ENCODE measurements at regions of chr17 and their contacts with region 1.

Region 1: DNA sequence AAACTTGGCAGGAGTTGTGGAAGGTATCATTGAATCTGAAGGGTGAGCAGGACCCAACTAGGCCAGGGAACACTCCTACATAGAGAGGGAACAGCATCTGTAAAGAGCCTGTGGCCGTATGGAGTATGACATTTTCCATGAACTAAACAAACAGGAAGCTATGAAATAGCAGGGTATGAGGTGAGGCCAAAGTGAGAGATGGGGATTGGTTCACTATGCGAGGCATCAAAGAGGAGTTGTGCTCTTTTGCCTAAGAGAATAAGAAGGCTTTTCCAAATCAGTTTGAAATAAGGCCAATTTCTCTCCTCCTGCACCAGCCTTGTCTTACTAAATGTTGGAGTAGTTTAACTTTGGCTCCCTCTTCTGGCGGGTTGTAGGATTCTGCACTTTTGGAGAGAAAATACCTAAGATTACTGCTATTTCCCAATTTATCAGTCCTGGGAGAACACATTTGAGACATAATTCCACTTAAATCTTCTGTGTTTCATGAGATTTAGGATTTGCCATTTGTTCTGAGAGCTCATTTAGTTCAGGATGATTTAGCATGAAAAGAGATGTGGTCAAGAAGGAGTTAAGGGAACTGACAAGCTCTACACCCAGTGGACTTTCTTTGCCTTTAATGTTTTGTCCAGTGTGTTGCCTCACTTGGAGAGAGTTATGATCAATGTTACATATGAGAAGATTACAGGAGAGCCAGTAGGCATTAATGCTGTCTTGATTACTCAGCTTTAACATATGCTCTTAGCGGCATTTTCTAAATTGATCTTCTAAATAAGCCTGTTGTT is 55.4 kb downstream of the TNRC6C start:
- DNase-seq: peak; percentile 69
- ATAC-seq: peak; percentile 65
- H3K4me3 Mint-ChIP-seq: no peak overlapping the region
- H3K27ac Mint-ChIP-seq: no peak overlapping the region
- H3K4me1 Mint-ChIP-seq: peaks cover 25% of the 10 kb centered on the region
- H3K27me3 Mint-ChIP-seq: no peaks in the 10 kb centered on the region
- CTCF ChIP-seq: peak; percentile 92

Region 2: GRCh38 chr17:77645072-77646045 is 368.5 kb before region 1 on chr17:
- CTCF ChIA-PET with region 1: interaction called, 13 read pairs
- POLR2A ChIA-PET with region 1: interaction called, 3 read pairs
- intact Hi-C with region 1: no loop called
- DNase-seq: peak; percentile 86
- ATAC-seq: peak; percentile 78
- H3K4me3 Mint-ChIP-seq: peak overlapping the region; percentile 56
- H3K27ac Mint-ChIP-seq: peak overlapping the region; percentile 94
- H3K4me1 Mint-ChIP-seq: peaks cover 32% of the 10 kb centered on the region
- H3K27me3 Mint-ChIP-seq: no peaks in the 10 kb centered on the region
- CTCF ChIP-seq: peak; percentile 56

Region 3: GRCh38 chr17:77881545-77881944 is 132.3 kb before region 1 on chr17:
- CTCF ChIA-PET with region 1: interaction called, 10 read pairs
- POLR2A ChIA-PET with region 1: no interaction called
- intact Hi-C with region 1: loop called (anchors 10 kb)
- DNase-seq: peak; percentile 88
- ATAC-seq: peak; percentile 60
- H3K4me3 Mint-ChIP-seq: peak overlapping the region; percentile 45
- H3K27ac Mint-ChIP-seq: peak overlapping the region; percentile 86
- H3K4me1 Mint-ChIP-seq: peaks cover 76% of the 10 kb centered on the region
- H3K27me3 Mint-ChIP-seq: no peaks in the 10 kb centered on the region
- CTCF ChIP-seq: no peak

Region 4: GRCh38 chr17:77963441-77963840 is 50.4 kb before region 1 on chr17:
- CTCF ChIA-PET with region 1: interaction called, 17 read pairs
- POLR2A ChIA-PET with region 1: interaction called, 5 read pairs
- intact Hi-C with region 1: loop called (anchors 5 kb)
- DNase-seq: peak; percentile 68
- ATAC-seq: peak; percentile 24
- H3K4me3 Mint-ChIP-seq: peak overlapping the region; percentile 56
- H3K27ac Mint-ChIP-seq: no peak overlapping the region
- H3K4me1 Mint-ChIP-seq: peaks cover 73% of the 10 kb centered on the region
- H3K27me3 Mint-ChIP-seq: no peaks in the 10 kb centered on the region
- CTCF ChIP-seq: no peak

Region 5: DNA sequence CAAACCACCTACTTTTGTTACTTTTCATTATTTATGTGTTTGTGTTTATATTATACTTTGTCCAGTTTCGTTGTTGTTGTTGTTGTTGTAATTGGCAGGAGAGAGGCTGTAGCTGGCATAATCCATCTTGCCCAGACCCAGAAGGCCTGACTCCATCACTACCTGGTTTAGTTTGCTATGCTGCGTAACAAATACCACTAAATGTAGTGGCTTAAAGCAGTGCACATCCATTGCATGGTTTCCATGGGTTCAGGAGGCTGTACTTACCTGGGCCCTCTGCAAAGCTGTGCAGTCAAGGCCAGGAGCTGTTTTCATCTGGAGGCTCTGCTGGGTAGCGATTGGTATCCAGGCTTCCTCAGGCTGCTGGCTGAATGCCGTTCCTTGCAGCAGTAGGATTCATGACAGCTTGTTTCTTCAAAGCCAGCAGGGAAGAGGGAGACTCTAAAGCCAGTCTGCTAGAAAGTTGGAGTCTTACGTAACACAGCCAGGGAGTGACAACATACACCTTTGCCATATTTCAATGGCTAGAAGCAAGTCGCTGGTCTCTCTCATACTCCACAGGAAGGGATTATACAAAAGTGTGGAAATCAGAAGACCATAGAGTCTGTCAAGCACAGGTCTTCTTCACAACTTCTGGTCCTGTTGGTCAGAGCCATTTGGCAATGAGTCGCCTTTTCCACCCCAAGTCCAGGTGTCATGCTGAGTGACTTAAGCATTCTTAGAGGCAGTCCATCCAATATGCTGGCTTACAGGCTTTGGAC is 14.3 kb before region 1 on chr17:
- CTCF ChIA-PET with region 1: interaction called, 33 read pairs
- POLR2A ChIA-PET with region 1: interaction called, 5 read pairs
- intact Hi-C with region 1: no loop called
- DNase-seq: peak; percentile 55
- ATAC-seq: peak; percentile 68
- H3K4me3 Mint-ChIP-seq: no peak overlapping the region
- H3K27ac Mint-ChIP-seq: no peak overlapping the region
- H3K4me1 Mint-ChIP-seq: peaks cover 69% of the 10 kb centered on the region
- H3K27me3 Mint-ChIP-seq: no peaks in the 10 kb centered on the region
- CTCF ChIP-seq: no peak

Region 6: GRCh38 chr17:78032166-78032565 is 18.3 kb after region 1 on chr17:
- CTCF ChIA-PET with region 1: interaction called, 45 read pairs
- POLR2A ChIA-PET with region 1: no interaction called
- intact Hi-C with region 1: no loop called
- DNase-seq: no peak
- ATAC-seq: no peak
- H3K4me3 Mint-ChIP-seq: no peak overlapping the region
- H3K27ac Mint-ChIP-seq: peak overlapping the region; percentile 48
- H3K4me1 Mint-ChIP-seq: peaks cover 26% of the 10 kb centered on the region
- H3K27me3 Mint-ChIP-seq: no peaks in the 10 kb centered on the region
- CTCF ChIP-seq: no peak

Region 7: GRCh38 chr17:78124081-78124848 is 110.4 kb after region 1 on chr17:
- CTCF ChIA-PET with region 1: no interaction called
- POLR2A ChIA-PET with region 1: no interaction called
- intact Hi-C with region 1: no loop called
- DNase-seq: no peak
- ATAC-seq: no peak
- H3K4me3 Mint-ChIP-seq: peak overlapping the region; percentile 78
- H3K27ac Mint-ChIP-seq: peak overlapping the region; percentile 80
- H3K4me1 Mint-ChIP-seq: peaks cover 55% of the 10 kb centered on the region
- H3K27me3 Mint-ChIP-seq: no peaks in the 10 kb centered on the region
- CTCF ChIP-seq: no peak

Region 8: GRCh38 chr17:78137392-78138203 is 123.7 kb after region 1 on chr17:
- CTCF ChIA-PET with region 1: no interaction called
- POLR2A ChIA-PET with region 1: no interaction called
- intact Hi-C with region 1: no loop called
- DNase-seq: peak; percentile 78
- ATAC-seq: no peak
- H3K4me3 Mint-ChIP-seq: peak overlapping the region; percentile 33
- H3K27ac Mint-ChIP-seq: peak overlapping the region; percentile 74
- H3K4me1 Mint-ChIP-seq: peaks cover 80% of the 10 kb centered on the region
- H3K27me3 Mint-ChIP-seq: no peaks in the 10 kb centered on the region
- CTCF ChIP-seq: peak; percentile 91

Region 9: GRCh38 chr17:78159575-78160158 is 145.8 kb after region 1 on chr17:
- CTCF ChIA-PET with region 1: no interaction called
- POLR2A ChIA-PET with region 1: no interaction called
- intact Hi-C with region 1: no loop called
- DNase-seq: no peak
- ATAC-seq: peak; percentile 35
- H3K4me3 Mint-ChIP-seq: no peak overlapping the region
- H3K27ac Mint-ChIP-seq: no peak overlapping the region
- H3K4me1 Mint-ChIP-seq: peaks cover 12% of the 10 kb centered on the region
- H3K27me3 Mint-ChIP-seq: no peaks in the 10 kb centered on the region
- CTCF ChIP-seq: no peak